OCI-LY7 (cell line): ENCODE measurements at regions of chr17 and their contacts with region 1.

Region 1: GRCh38 chr17:72063262-72063661 is 57.6 kb upstream of the SOX9 start:
- DNase-seq: no peak
- H3K4me3 ChIP-seq: no peak overlapping the region
- H3K27ac ChIP-seq: no peak overlapping the region
- H3K4me1 ChIP-seq: no peaks in the 10 kb centered on the region
- CTCF ChIP-seq: no peak

Region 2: GRCh38 chr17:71987634-71988033 is 75.6 kb before region 1 on chr17:
- CTCF ChIA-PET with region 1: no interaction called
- POLR2A ChIA-PET with region 1: no interaction called
- intact Hi-C with region 1: no loop called
- DNase-seq: peak; percentile 55
- H3K4me3 ChIP-seq: no peak overlapping the region
- H3K27ac ChIP-seq: no peak overlapping the region
- H3K4me1 ChIP-seq: peaks cover 27% of the 10 kb centered on the region
- CTCF ChIP-seq: no peak

Region 3: GRCh38 chr17:72030067-72030899 is 33.0 kb before region 1 on chr17:
- CTCF ChIA-PET with region 1: no interaction called
- POLR2A ChIA-PET with region 1: no interaction called
- intact Hi-C with region 1: no loop called
- DNase-seq: peak; percentile 77
- H3K4me3 ChIP-seq: peak overlapping the region; percentile 69
- H3K27ac ChIP-seq: peak overlapping the region; percentile 87
- H3K4me1 ChIP-seq: peaks cover 83% of the 10 kb centered on the region
- CTCF ChIP-seq: peak; percentile 46

Region 4: DNA sequence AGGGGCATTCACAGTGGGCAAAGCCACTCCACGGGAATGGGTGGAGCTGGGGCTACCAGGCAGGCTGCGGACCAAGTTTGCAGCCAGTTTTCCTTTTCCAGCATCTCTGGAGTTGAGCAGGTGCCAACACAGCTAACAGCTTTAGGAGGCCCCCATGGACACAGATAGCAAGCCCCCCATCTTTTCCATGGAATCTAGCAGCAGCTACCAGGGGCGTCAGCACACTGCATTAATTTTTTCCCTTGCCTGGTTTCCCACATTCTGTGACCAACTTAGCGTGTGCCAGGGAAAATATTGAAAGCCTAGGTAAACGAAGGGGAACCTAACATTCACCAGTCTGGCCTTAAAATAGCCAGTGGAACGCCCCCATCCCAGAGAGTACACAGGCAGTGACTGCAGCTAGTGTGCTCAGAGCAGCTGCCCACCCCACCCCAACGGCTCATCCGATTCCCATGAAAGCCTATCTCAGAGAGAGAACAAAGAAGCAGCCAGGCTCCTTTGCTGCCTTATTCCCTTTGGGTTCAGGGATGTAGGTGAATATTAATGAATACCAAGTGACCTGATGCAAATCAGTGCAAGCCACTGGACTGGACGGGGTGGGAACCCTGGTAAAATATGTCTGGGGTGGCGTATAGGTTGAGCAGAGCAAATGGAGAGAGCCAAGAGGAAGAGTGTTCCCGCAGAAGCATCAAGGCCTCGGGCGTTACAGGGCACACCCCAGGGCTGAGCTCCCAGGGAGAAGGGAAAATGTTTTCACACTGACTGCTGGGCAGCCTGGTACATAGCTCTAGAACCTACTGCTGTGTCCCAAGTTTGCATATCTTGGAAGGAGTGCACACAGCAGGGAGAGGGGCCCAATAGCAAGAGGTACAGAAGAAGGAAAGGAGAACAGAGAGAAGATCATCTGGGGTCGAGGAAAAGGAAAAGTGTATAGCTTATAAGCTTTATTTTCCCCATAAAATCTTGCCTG is 16.3 kb before region 1 on chr17:
- CTCF ChIA-PET with region 1: interaction called, 3 read pairs
- POLR2A ChIA-PET with region 1: interaction called, 3 read pairs
- intact Hi-C with region 1: loop called (anchors 1 kb)
- DNase-seq: no peak
- H3K4me3 ChIP-seq: no peak overlapping the region
- H3K27ac ChIP-seq: no peak overlapping the region
- H3K4me1 ChIP-seq: no peaks in the 10 kb centered on the region
- CTCF ChIP-seq: no peak

Region 5: GRCh38 chr17:72182256-72182910 is 119.1 kb after region 1 on chr17:
- CTCF ChIA-PET with region 1: no interaction called
- POLR2A ChIA-PET with region 1: no interaction called
- intact Hi-C with region 1: no loop called
- DNase-seq: no peak
- H3K4me3 ChIP-seq: no peak overlapping the region
- H3K27ac ChIP-seq: no peak overlapping the region
- H3K4me1 ChIP-seq: no peaks in the 10 kb centered on the region
- CTCF ChIP-seq: no peak